Activated T-helper 1 cell treated with anti-CD3 and anti-CD28 coated beads, Interleukin-12 subunit alpha, Interleukin-12 subunit beta, Interleukin-2, Interleukin-4 antibody, amounts not matched to agents 30 ng/mL and 10 ng/mL and 1 ng/mL, durations not matched to agents 14 hours and 24 hours and 36 hours (primary cell): ENCODE measurements at regions of chr16 and their contacts with region 1.

Region 1: DNA sequence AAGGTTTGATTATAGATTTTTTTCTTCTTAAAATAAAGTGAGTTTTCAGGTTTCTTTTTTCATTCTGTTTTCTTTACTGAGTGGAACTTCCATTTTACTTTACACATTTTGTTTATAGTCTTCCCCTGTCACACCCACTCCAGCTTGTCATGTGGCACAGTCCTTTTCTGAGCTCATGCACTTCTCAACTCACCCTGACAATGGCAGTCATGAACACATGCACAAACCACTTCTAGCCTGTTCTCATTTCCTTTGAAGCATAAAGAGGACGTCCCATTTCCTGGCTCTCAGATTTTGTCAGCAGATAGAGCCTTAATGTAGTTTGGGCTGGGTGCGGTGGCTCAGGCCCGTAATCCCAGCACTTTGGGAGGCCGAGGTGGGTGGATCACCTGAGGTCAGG is 168.0 kb downstream of the AHSP start:
- DNase-seq: peak; percentile 69
- H3K4me3 Mint-ChIP-seq: no peak overlapping the region
- H3K27ac Mint-ChIP-seq: no peak overlapping the region
- H3K4me1 Mint-ChIP-seq: peaks cover 5% of the 10 kb centered on the region
- H3K27me3 Mint-ChIP-seq: peaks cover 5% of the 10 kb centered on the region

Region 2: GRCh38 chr16:31507929-31508705 is 187.6 kb before region 1 on chr16 and contains the start of gene RUSF1:
- intact Hi-C with region 1: loop called (anchors 1 kb)
- DNase-seq: peak; percentile 81
- H3K4me3 Mint-ChIP-seq: peak within 1 kb of the TSS; percentile 95
- H3K27ac Mint-ChIP-seq: peak within 1 kb of the TSS; percentile 93
- H3K4me1 Mint-ChIP-seq: peaks cover 49% of the 10 kb centered on the region
- H3K27me3 Mint-ChIP-seq: no peaks in the 10 kb centered on the region
- total RNA-seq, gene RUSF1: 36.3 and 42.2 TPM in 2 replicates

Region 3: DNA sequence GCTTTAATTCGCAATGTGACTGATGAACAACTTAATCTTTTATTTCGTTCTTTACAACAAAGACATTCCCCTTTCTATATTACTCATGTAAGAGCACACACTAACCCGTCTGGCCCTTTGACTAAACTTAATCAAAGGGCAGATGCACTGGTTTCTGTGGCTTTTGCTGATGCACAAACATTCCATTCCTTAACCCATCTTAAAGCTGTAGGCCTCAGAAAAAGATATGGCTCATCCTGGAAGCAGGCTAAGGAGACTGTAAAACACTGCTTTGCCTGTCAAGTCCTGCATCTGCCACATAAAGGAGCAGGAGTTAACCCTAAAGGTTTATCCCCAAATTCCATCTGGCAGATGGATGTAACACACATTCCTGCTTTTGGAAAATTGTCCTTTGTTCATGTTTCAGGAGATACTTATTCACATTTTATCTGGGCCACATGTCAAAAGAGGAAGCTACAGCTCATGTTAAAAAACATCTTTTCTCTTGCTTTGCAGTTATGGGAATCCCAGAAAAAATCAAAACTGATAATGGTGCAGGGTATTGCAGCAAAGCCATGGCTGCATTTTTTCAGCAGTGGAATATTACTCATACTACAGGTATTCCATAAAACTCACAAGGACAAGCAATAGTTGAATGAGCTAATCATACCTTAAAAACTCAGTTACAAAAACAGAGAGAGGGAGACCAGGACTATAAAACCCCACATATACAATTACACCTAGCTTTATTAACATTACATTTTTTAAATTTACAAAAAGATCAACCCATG is 30.8 kb before region 1 on chr16:
- intact Hi-C with region 1: no loop called
- DNase-seq: no peak
- H3K4me3 Mint-ChIP-seq: no peak overlapping the region
- H3K27ac Mint-ChIP-seq: no peak overlapping the region
- H3K4me1 Mint-ChIP-seq: no peaks in the 10 kb centered on the region
- H3K27me3 Mint-ChIP-seq: peaks cover 2% of the 10 kb centered on the region

Region 4: GRCh38 chr16:31713071-31713944 is 17.6 kb after region 1 on chr16:
- intact Hi-C with region 1: loop called (anchors 1 kb)
- DNase-seq: peak; percentile 86
- H3K4me3 Mint-ChIP-seq: peak overlapping the region; percentile 99
- H3K27ac Mint-ChIP-seq: peak overlapping the region; percentile 99
- H3K4me1 Mint-ChIP-seq: peaks cover 31% of the 10 kb centered on the region
- H3K27me3 Mint-ChIP-seq: no peaks in the 10 kb centered on the region

Region 5: DNA sequence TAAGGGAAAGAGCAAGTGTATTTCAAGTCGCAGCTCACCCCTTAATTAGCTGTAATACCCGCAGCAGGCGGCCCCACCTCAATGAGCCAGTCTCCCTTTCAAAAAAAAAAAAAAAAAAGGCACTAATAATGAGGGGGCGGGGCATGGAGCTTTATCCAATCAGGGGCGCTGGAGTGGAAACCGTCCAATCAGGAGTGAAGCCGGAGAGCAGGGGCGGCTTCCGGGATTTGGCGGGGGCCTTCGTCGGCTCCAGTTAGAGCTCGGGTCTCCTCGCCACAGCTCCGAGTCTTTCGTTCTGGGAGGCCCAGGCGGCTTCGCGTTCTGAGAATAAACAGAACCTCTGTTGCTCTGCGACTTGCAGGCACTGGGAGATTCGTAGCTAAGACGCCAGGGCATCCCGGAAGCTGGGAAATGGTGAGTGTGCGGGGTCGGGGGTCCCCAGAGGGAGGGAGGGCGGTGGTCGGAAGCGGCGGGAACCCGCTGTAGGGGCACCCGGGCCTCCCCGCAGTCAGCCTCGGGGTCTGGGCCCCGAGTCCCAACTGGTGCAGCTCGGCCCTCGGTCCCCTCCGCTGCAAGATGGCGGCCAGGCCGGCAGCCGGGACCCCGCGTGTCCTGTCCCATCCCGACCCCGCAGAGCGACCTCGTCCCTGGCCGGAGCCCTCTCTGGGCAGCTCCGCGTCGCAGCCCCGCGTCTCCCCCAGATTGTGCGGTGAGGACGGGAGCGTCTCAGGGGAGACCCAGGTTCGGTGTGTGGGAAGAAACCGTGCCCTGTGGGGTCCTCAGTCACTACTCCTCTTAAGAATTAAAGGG is 178.1 kb after region 1 on chr16 and contains the start of gene ZNF267:
- intact Hi-C with region 1: no loop called
- DNase-seq: peak; percentile 90
- H3K4me3 Mint-ChIP-seq: peak within 1 kb of the TSS; percentile 96
- H3K27ac Mint-ChIP-seq: peak within 1 kb of the TSS; percentile 94
- H3K4me1 Mint-ChIP-seq: peaks cover 84% of the 10 kb centered on the region
- H3K27me3 Mint-ChIP-seq: no peaks in the 10 kb centered on the region
- total RNA-seq, gene ZNF267: 93.9 and 98.9 TPM in 2 replicates